GM23248 (cell line): ENCODE measurements at regions of chr13 and their contacts with region 1.

Region 1: GRCh38 chr13:59391696-59392095 is 772.0 kb downstream of the DIAPH3 start:
- DNase-seq: peak; percentile 79
- H3K4me3 ChIP-seq: no peak overlapping the region
- H3K27ac ChIP-seq: no peak overlapping the region
- H3K4me1 ChIP-seq: no peaks in the 10 kb centered on the region
- H3K27me3 ChIP-seq: peaks cover 3% of the 10 kb centered on the region; the same call in 1 of the 2 replicates

Region 2: GRCh38 chr13:59766233-59766632 is 374.5 kb after region 1 on chr13:
- in situ Hi-C with region 1: loop called (anchors 10 kb)
- DNase-seq: no peak
- H3K4me3 ChIP-seq: no peak overlapping the region
- H3K27ac ChIP-seq: no peak overlapping the region
- H3K4me1 ChIP-seq: no peaks in the 10 kb centered on the region
- H3K27me3 ChIP-seq: no peaks in the 10 kb centered on the region